ENCODE measurements at regions of chr10 and their contacts with region 1.

Region 1: GRCh38 chr10:4241724-4242345 is 456.8 kb upstream of the KLF6 start:
- DNase-seq: no peak
- H3K4me3 ChIP-seq: peak overlapping the region; percentile 52 to 53
- H3K27ac ChIP-seq: peak overlapping the region; percentile 87 to 88
- H3K4me1 ChIP-seq: peaks cover 0 to 58% (median 3%) of the 10 kb centered on the region in 4 donors
- H3K27me3 ChIP-seq: no peaks in the 10 kb centered on the region
- CTCF ChIP-seq: no peak

Region 2: GRCh38 chr10:3935141-3935540 is 306.7 kb before region 1 on chr10:
- intact Hi-C with region 1: loop called (anchors 10 kb)
- DNase-seq: peak; percentile 57 to 79
- H3K4me3 ChIP-seq: peak overlapping the region; percentile 33 to 39
- H3K27ac ChIP-seq: peak overlapping the region; percentile 81 to 82
- H3K4me1 ChIP-seq: peaks cover 0 to 26% (median 13%) of the 10 kb centered on the region in 4 donors
- H3K27me3 ChIP-seq: no peaks in the 10 kb centered on the region
- CTCF ChIP-seq: no peak

Region 3: GRCh38 chr10:4051011-4051640 is 190.7 kb before region 1 on chr10:
- intact Hi-C with region 1: loop called (anchors 10 kb)
- DNase-seq: peak; percentile 81 to 83
- H3K4me3 ChIP-seq: peak overlapping the region; percentile 39 to 41
- H3K27ac ChIP-seq: peak overlapping the region; percentile 86 to 91
- H3K4me1 ChIP-seq: peaks cover 0 to 60% (median 28%) of the 10 kb centered on the region in 4 donors
- H3K27me3 ChIP-seq: no peaks in the 10 kb centered on the region
- CTCF ChIP-seq: no peak